H1 (cell line): ENCODE measurements at regions of chr10 and their contacts with region 1.

Region 1: GRCh38 chr10:93746844-93747284 is 10.9 kb upstream of the LGI1 start:
- DNase-seq: peak; percentile 66 to 80
- H3K4me3 ChIP-seq: no peak overlapping the region
- H3K27ac ChIP-seq: no peak overlapping the region
- H3K4me1 ChIP-seq: peaks cover 9 to 30% (median 24%) of the 10 kb centered on the region in 4 experiments
- H3K27me3 ChIP-seq: no peaks in the 10 kb centered on the region
- CTCF ChIP-seq: peak; percentile 57 to 73 (median 67)
- EP300 ChIP-seq: no peak
- POLR2A ChIP-seq: no peak
- RAD21 ChIP-seq: peak; percentile 52 to 66

Region 2: GRCh38 chr10:93672022-93672678 is 74.7 kb before region 1 on chr10:
- CTCF ChIA-PET with region 1: no interaction called
- POLR2A ChIA-PET with region 1: no interaction called
- DNase-seq: no peak
- H3K4me3 ChIP-seq: no peak overlapping the region
- H3K27ac ChIP-seq: no peak overlapping the region
- H3K4me1 ChIP-seq: no peaks in the 10 kb centered on the region
- H3K27me3 ChIP-seq: no peaks in the 10 kb centered on the region
- CTCF ChIP-seq: no peak
- EP300 ChIP-seq: no peak
- POLR2A ChIP-seq: no peak
- RAD21 ChIP-seq: no peak

Region 3: GRCh38 chr10:93702211-93703001 is 44.5 kb before region 1 on chr10 and contains the start of gene FRA10AC1:
- CTCF ChIA-PET with region 1: interaction called, 27 read pairs
- POLR2A ChIA-PET with region 1: interaction called, 3 read pairs
- DNase-seq: peak; percentile 65 to 97
- H3K4me3 ChIP-seq: peak within 1 kb of the TSS; percentile 76 to 85 (median 77)
- H3K27ac ChIP-seq: 0 out of 2 replicates have a peak within 1 kb of the TSS, but pooled peaks have one; percentile 24
- H3K4me1 ChIP-seq: peaks cover 0 to 3% (median 1%) of the 10 kb centered on the region in 4 experiments; a peak in 1 of 7 replicates
- H3K27me3 ChIP-seq: no peaks in the 10 kb centered on the region
- CTCF ChIP-seq: peak; percentile 45 to 62 (median 51); a peak in 3 of 4 replicates
- EP300 ChIP-seq: peak in 1 of 2 experiments; percentile 94; a peak in 2 of 3 replicates
- POLR2A ChIP-seq: peak; percentile 81 to 88
- RAD21 ChIP-seq: peak; percentile 46 to 59
- total RNA-seq, gene FRA10AC1: 11.9 and 13.5 TPM in 2 replicates

Region 4: GRCh38 chr10:93757136-93757535 is 10.3 kb after region 1 on chr10:
- CTCF ChIA-PET with region 1: interaction called, 37 read pairs
- POLR2A ChIA-PET with region 1: interaction called, 4 read pairs
- DNase-seq: no peak
- H3K4me3 ChIP-seq: no peak overlapping the region
- H3K27ac ChIP-seq: no peak overlapping the region
- H3K4me1 ChIP-seq: peaks cover 11 to 21% (median 13%) of the 10 kb centered on the region in 4 experiments; a peak in 5 of 7 replicates
- H3K27me3 ChIP-seq: peaks cover 0 to 3% (median 2%) of the 10 kb centered on the region in 4 experiments; a peak in 4 of 7 replicates
- CTCF ChIP-seq: no peak
- EP300 ChIP-seq: no peak
- POLR2A ChIP-seq: no peak
- RAD21 ChIP-seq: no peak

Region 5: GRCh38 chr10:93784059-93784458 is 37.2 kb after region 1 on chr10:
- CTCF ChIA-PET with region 1: interaction called, 91 read pairs
- POLR2A ChIA-PET with region 1: no interaction called
- DNase-seq: no peak
- H3K4me3 ChIP-seq: no peak overlapping the region
- H3K27ac ChIP-seq: no peak overlapping the region
- H3K4me1 ChIP-seq: no peaks in the 10 kb centered on the region
- H3K27me3 ChIP-seq: no peaks in the 10 kb centered on the region
- CTCF ChIP-seq: peak in 1 of 3 experiments; percentile 1; a peak in 1 of 4 replicates
- EP300 ChIP-seq: no peak
- POLR2A ChIP-seq: no peak
- RAD21 ChIP-seq: peak; percentile 16 to 38; a peak in 3 of 4 replicates

Region 6: DNA sequence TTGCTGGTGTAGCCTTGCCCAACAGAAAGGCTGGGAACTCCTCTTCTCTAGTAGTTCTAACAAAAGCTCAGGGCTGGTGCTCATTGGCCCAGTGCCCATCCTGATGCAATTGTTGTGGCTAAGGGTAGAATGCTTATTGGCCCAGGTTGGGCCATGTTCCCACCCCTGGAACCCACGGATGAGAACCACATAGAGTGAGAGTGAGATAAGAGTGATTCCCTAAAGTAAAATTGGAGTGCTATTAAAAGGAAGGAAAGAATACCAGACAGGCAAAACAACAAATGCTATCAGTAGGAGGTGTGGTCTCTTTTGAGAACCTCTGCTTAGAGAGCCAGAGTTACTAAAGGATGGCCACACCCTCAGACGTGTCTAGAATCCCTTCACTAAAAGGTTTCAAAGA is 60.0 kb after region 1 on chr10:
- CTCF ChIA-PET with region 1: interaction called, 287 read pairs
- POLR2A ChIA-PET with region 1: no interaction called
- DNase-seq: no peak
- H3K4me3 ChIP-seq: no peak overlapping the region
- H3K27ac ChIP-seq: no peak overlapping the region
- H3K4me1 ChIP-seq: no peaks in the 10 kb centered on the region; a peak in 2 of 7 replicates
- H3K27me3 ChIP-seq: no peaks in the 10 kb centered on the region
- CTCF ChIP-seq: no peak
- EP300 ChIP-seq: no peak
- POLR2A ChIP-seq: no peak
- RAD21 ChIP-seq: no peak

Region 7: GRCh38 chr10:93859049-93859655 is 112.3 kb after region 1 on chr10:
- CTCF ChIA-PET with region 1: interaction called, 22 read pairs
- POLR2A ChIA-PET with region 1: no interaction called
- DNase-seq: no peak
- H3K4me3 ChIP-seq: no peak overlapping the region
- H3K27ac ChIP-seq: no peak overlapping the region
- H3K4me1 ChIP-seq: no peaks in the 10 kb centered on the region
- H3K27me3 ChIP-seq: no peaks in the 10 kb centered on the region; a peak in 2 of 7 replicates
- CTCF ChIP-seq: peak in 2 of 3 experiments; percentile 25 to 39; a peak in 2 of 4 replicates
- EP300 ChIP-seq: no peak
- POLR2A ChIP-seq: no peak
- RAD21 ChIP-seq: peak; percentile 56 to 71